AG04449 (cell line): ENCODE measurements at regions of chr3 and their contacts with region 1.

Region 1: GRCh38 chr3:9352917-9353752 is 9.7 kb upstream of the THUMPD3 start:
- DNase-seq: no peak
- H3K4me3 ChIP-seq: no peak overlapping the region
- CTCF ChIP-seq: peak; percentile 84

Region 2: GRCh38 chr3:9168241-9168741 is 184.8 kb before region 1 on chr3:
- CTCF ChIA-PET with region 1: no interaction called
- POLR2A ChIA-PET with region 1: no interaction called
- DNase-seq: no peak
- H3K4me3 ChIP-seq: no peak overlapping the region
- CTCF ChIP-seq: no peak

Region 3: DNA sequence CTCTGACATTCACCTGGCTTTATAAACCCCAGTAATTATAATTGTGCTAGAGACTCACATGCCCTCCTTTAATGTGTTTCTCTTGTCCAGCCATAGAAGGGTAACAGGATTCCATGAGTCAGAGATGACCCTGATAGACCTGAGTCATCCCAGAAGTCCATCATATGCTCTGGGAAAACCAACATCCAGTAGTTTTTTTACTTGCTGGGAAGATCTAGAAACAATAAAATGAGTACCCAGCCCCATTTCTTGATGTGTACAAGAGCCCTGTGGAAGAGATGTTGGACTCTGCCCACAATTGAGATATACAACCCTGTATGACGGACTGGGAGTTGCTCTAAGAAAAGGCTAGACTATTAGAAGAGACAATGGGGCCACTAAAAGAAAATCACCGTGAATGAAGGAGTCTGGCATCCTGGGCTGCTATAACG is 12.6 kb before region 1 on chr3:
- CTCF ChIA-PET with region 1: interaction called, 22 read pairs
- POLR2A ChIA-PET with region 1: no interaction called
- DNase-seq: no peak
- H3K4me3 ChIP-seq: no peak overlapping the region
- CTCF ChIP-seq: no peak